Activated CD8-positive, alpha-beta T cell treated with anti-CD3 and anti-CD28 coated beads for 36 hours (primary cell): ENCODE measurements at regions of chr15 and their contacts with region 1.

Region 1: DNA sequence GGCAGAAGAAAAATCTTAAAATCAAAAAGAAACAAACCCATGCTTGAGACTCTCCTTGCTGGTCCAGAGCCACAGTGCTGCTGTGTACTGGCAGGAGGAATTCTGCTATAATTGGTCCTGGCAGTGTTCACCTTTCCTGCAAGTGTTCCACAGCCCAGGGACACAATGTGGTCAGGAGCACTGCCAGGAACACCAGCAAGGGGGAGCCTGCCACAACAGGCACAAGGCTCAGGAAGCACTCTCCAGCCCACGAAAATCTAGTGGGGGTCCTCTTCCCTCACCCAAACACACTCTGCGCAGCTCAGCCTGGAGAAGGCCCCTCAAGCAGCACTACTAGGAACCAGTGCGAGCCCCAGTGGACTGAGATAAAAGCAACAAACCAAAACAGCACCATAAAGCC is 92.9 kb downstream of the UBE3A start:
- DNase-seq: no peak
- ATAC-seq: no peak
- H3K4me3 Mint-ChIP-seq: no peak overlapping the region
- H3K27ac Mint-ChIP-seq: no peak overlapping the region
- H3K4me1 Mint-ChIP-seq: peaks cover 7% of the 10 kb centered on the region
- H3K27me3 Mint-ChIP-seq: no peaks in the 10 kb centered on the region
- CTCF ChIP-seq: no peak

Region 2: GRCh38 chr15:25372298-25372697 is 26.4 kb after region 1 on chr15:
- CTCF ChIA-PET with region 1: no interaction called
- POLR2A ChIA-PET with region 1: no interaction called
- intact Hi-C with region 1: no loop called
- DNase-seq: no peak
- ATAC-seq: no peak
- H3K4me3 Mint-ChIP-seq: no peak overlapping the region
- H3K27ac Mint-ChIP-seq: no peak overlapping the region
- H3K4me1 Mint-ChIP-seq: peaks cover 19% of the 10 kb centered on the region
- H3K27me3 Mint-ChIP-seq: no peaks in the 10 kb centered on the region
- CTCF ChIP-seq: no peak

Region 3: GRCh38 chr15:25438601-25439368 is 92.8 kb after region 1 on chr15 and contains the start of gene UBE3A:
- CTCF ChIA-PET with region 1: no interaction called
- POLR2A ChIA-PET with region 1: no interaction called
- intact Hi-C with region 1: loop called (anchors 10 kb)
- DNase-seq: peak; percentile 90
- ATAC-seq: peak; percentile 95
- H3K4me3 Mint-ChIP-seq: peak within 1 kb of the TSS; percentile 88
- H3K27ac Mint-ChIP-seq: peak within 1 kb of the TSS; percentile 95
- H3K4me1 Mint-ChIP-seq: peaks cover 29% of the 10 kb centered on the region
- H3K27me3 Mint-ChIP-seq: no peaks in the 10 kb centered on the region
- CTCF ChIP-seq: no peak
- total RNA-seq, gene UBE3A: 102 to 110 TPM